ENCODE measurements at regions of chr19 and their contacts with region 1.

Region 1: GRCh38 chr19:40862785-40863184 is 12.5 kb upstream of the CYP2A6 start:
- H3K4me3 ChIP-seq: no peak overlapping the region
- H3K27ac ChIP-seq: peak overlapping the region; percentile 47; the same call in 1 of the 2 replicates
- H3K4me1 ChIP-seq: peaks cover 17% of the 10 kb centered on the region
- CTCF ChIP-seq: no peak

Region 2: DNA sequence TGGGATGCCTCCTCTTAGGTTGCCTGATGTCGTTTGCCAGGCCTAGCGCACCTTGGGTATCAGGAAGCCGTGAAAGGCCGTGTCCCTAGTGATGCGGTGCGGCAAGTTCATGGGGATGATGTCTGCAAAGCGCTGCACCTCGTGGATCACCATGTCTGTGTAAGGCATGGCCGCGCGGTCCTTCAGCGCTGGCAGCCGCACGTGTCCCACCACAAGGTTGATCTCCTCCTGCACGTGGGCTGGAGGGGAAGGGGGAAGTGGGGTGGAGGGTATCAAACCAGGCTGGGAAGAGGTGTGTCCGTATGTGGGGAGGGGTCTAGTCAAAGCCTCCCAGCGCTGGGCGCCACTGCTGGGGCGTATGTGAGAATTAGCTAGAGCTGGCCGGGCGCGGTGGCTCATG is 40.6 kb before region 1 on chr19:
- CTCF ChIA-PET with region 1: interaction called, 10 read pairs
- POLR2A ChIA-PET with region 1: no interaction called
- H3K4me3 ChIP-seq: no peak overlapping the region
- H3K27ac ChIP-seq: peak overlapping the region; percentile 54; the same call in 1 of the 2 replicates
- H3K4me1 ChIP-seq: peaks cover 20% of the 10 kb centered on the region
- CTCF ChIP-seq: no peak

Region 3: GRCh38 chr19:40962460-40962961 is 99.7 kb after region 1 on chr19:
- CTCF ChIA-PET with region 1: no interaction called
- POLR2A ChIA-PET with region 1: no interaction called
- H3K4me3 ChIP-seq: no peak overlapping the region
- H3K27ac ChIP-seq: no peak overlapping the region
- H3K4me1 ChIP-seq: peaks cover 20% of the 10 kb centered on the region
- CTCF ChIP-seq: no peak

Measured in HEK293 (cell line).